CD4-positive, alpha-beta T cell (primary cell): ENCODE measurements at regions of chr17 and their contacts with region 1.

Region 1: GRCh38 chr17:63919311-63919723 is 678 bp upstream of the GH1 start:
- DNase-seq: peak; percentile 58 to 89 (median 66)
- ATAC-seq: peak; percentile 100
- H3K4me3 ChIP-seq: no peak overlapping the region
- H3K4me3 Mint-ChIP-seq: no peak overlapping the region
- H3K27ac ChIP-seq: no peak overlapping the region
- H3K27ac Mint-ChIP-seq: peak overlapping the region; percentile 9
- H3K4me1 ChIP-seq: peaks cover 8% of the 10 kb centered on the region
- H3K4me1 Mint-ChIP-seq: peaks cover 6% of the 10 kb centered on the region
- H3K27me3 ChIP-seq: no peaks in the 10 kb centered on the region
- H3K27me3 Mint-ChIP-seq: no peaks in the 10 kb centered on the region
- CTCF ChIP-seq: peak; percentile 95

Region 2: DNA sequence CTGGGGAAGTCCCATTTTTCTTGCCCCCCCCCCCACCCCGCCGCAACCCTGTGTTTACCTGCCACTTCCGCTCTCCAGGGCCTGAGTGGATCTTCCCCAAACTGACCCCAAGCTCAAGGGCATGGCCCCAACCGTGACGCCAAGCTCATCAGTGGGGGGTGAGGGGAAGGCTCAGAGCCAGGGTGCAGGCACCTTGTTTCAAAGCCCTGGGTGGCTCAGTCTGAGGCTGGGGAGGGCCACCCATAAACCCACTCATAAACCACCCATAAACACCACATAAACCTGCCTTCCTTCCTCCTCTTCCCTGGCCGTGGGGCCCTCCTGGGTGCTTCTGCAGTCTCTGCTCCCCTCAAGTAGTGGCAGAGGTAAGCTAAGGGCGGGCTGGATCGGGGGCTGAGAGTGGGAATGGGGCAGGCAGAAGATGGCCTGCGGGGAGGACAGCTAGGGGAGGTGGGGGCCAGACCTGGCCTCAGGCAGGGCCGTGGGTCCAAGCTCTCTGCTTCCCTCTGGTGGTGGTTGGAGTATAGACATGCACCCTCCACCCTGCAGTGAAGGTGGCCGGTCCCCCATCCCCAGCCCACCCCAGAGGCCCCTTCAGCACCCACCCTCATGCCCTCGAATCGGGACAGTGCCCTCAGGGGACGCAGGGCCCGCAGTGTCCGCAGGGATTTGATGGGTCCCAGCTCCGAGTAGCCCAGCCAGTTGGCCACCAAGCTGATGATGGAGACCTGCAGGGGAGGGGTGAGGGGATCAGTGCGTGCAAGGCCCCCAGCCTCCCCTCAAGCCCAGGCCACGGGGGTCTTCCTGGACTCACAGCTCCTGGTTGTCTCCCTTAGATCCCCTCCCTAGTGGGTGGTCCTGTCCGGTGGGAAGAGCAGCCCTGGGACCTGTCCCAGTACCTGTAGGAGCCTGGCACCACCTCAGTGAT is 27.4 kb after region 1 on chr17:
- CTCF ChIA-PET with region 1: interaction called, 29 read pairs
- POLR2A ChIA-PET with region 1: interaction called, 17 read pairs
- intact Hi-C with region 1: loop called in 1 of 2 experiments (anchors 1 kb)
- DNase-seq: peak; percentile 29 to 81 (median 40)
- ATAC-seq: peak; percentile 80
- H3K4me3 ChIP-seq: peak overlapping the region; percentile 39
- H3K4me3 Mint-ChIP-seq: peak overlapping the region; percentile 58
- H3K27ac ChIP-seq: no peak overlapping the region
- H3K27ac Mint-ChIP-seq: no peak overlapping the region
- H3K4me1 ChIP-seq: peaks cover 25% of the 10 kb centered on the region
- H3K4me1 Mint-ChIP-seq: peaks cover 29% of the 10 kb centered on the region
- H3K27me3 ChIP-seq: no peaks in the 10 kb centered on the region
- H3K27me3 Mint-ChIP-seq: no peaks in the 10 kb centered on the region
- CTCF ChIP-seq: peak; percentile 87

Region 3: GRCh38 chr17:63984651-63985386 is 65.5 kb after region 1 on chr17:
- CTCF ChIA-PET with region 1: interaction called, 24 read pairs
- POLR2A ChIA-PET with region 1: no interaction called
- intact Hi-C with region 1: loop called (anchors 1 to 5 kb)
- DNase-seq: peak in 11 of 14 experiments; percentile 24 to 83 (median 49)
- ATAC-seq: peak; percentile 93
- H3K4me3 ChIP-seq: no peak overlapping the region
- H3K4me3 Mint-ChIP-seq: peak overlapping the region; percentile 63
- H3K27ac ChIP-seq: peak overlapping the region in 1 of 2 donors; percentile 0
- H3K27ac Mint-ChIP-seq: peak overlapping the region; percentile 77
- H3K4me1 ChIP-seq: peaks cover 26% of the 10 kb centered on the region
- H3K4me1 Mint-ChIP-seq: peaks cover 26% of the 10 kb centered on the region
- H3K27me3 ChIP-seq: no peaks in the 10 kb centered on the region
- H3K27me3 Mint-ChIP-seq: no peaks in the 10 kb centered on the region
- CTCF ChIP-seq: no peak

Region 4: DNA sequence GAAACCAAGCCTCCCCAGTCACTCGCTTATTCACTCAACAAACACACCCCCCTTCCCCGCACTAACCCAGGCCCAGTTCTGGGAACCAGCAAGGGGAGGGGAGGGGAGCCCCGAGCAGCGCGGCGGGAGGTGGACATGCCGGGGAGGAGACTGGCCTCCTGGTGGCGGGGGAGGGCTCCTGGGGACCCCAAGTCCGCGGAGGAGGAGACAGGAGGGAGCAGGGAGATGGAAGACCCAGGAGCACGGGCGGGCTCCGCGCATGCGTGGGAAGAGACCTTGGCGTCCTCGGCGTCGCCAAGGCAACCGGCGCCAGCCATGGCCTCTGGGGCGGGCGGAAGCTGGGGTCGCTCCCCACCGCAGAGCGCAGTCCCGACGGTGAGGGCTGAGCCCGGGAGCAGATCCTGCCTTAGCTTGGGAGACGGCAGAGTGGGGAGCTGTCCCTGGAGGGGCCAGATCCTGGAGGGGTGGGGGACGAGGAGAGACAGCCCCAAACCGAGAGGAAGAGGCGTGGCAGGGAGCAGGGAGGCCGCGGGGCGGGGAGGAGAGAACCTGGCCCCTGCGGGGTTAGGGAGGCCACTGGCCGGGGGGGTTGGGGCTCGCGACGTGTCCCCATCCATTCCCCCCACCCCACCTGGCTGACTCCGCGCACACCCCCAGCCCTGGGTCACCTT is 78.9 kb after region 1 on chr17 and contains the start of gene PRR29:
- CTCF ChIA-PET with region 1: interaction called, 9 read pairs
- POLR2A ChIA-PET with region 1: no interaction called
- intact Hi-C with region 1: loop called in 1 of 2 experiments (anchors 5 kb)
- DNase-seq: peak; percentile 56 to 90 (median 70)
- ATAC-seq: peak; percentile 70
- H3K4me3 ChIP-seq: peak within 1 kb of the TSS; percentile 80
- H3K4me3 Mint-ChIP-seq: peak within 1 kb of the TSS; percentile 91
- H3K27ac ChIP-seq: no peak within 1 kb of the TSS
- H3K27ac Mint-ChIP-seq: peak within 1 kb of the TSS; percentile 73
- H3K4me1 ChIP-seq: peaks cover 45% of the 10 kb centered on the region
- H3K4me1 Mint-ChIP-seq: peaks cover 58% of the 10 kb centered on the region
- H3K27me3 ChIP-seq: no peaks in the 10 kb centered on the region
- H3K27me3 Mint-ChIP-seq: no peaks in the 10 kb centered on the region
- CTCF ChIP-seq: no peak
- total RNA-seq, gene PRR29: 0.56 to 0.71 TPM

Region 5: DNA sequence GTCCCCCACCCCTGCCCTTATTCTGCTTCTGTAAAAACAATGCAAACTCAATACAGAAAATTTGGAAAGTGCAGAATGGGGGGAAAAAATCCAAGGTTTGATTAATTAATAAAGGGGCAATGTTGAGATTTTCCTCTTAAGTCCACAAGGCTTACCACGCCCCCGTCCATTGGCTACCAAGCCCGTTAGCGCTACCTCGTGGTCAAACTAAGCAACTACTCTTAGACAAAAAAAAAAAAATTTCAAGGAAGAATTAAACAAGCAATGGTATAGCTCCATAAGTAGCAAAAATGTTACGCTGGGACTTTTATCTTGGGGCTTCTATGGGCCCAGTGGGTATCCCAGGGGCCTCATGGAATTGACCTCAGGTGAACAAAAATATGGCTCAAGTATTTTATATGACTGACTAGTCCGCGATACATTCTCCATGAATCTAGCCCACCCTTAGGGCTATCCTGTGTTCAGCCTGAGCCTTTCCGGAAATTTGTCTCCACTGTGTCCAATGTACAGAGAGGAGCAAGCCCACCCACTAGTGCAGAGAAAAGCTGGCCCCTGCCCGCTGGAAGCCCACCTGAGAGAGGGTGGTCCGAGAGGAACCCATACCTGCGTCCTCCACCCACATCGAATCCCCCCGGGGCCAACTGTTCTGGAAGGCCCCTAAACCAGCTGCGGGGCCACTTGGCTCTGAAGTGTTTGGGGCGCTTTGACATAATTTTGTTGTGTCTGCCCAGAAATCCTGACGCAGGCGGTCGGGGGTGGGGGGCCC is 362.8 kb after region 1 on chr17:
- CTCF ChIA-PET with region 1: no interaction called
- POLR2A ChIA-PET with region 1: no interaction called
- intact Hi-C with region 1: loop called (anchors 1 to 5 kb)
- DNase-seq: peak; percentile 9 to 83 (median 40)
- ATAC-seq: peak; percentile 74
- H3K4me3 ChIP-seq: no peak overlapping the region
- H3K4me3 Mint-ChIP-seq: no peak overlapping the region
- H3K27ac ChIP-seq: no peak overlapping the region
- H3K27ac Mint-ChIP-seq: no peak overlapping the region
- H3K4me1 ChIP-seq: peaks cover 3% of the 10 kb centered on the region
- H3K4me1 Mint-ChIP-seq: no peaks in the 10 kb centered on the region
- H3K27me3 ChIP-seq: no peaks in the 10 kb centered on the region
- H3K27me3 Mint-ChIP-seq: no peaks in the 10 kb centered on the region
- CTCF ChIP-seq: peak; percentile 63